MCF 10A (cell line): ENCODE measurements at regions of chr4 and their contacts with region 1.

Region 1: GRCh38 chr4:110049951-110050925 is 137.6 kb downstream of the EGF start:
- DNase-seq: peak; percentile 58
- H3K4me3 Mint-ChIP-seq: no peak overlapping the region
- H3K27ac Mint-ChIP-seq: no peak overlapping the region
- H3K4me1 Mint-ChIP-seq: peaks cover 11% of the 10 kb centered on the region
- H3K27me3 Mint-ChIP-seq: no peaks in the 10 kb centered on the region
- CTCF ChIP-seq: peak; percentile 82

Region 2: DNA sequence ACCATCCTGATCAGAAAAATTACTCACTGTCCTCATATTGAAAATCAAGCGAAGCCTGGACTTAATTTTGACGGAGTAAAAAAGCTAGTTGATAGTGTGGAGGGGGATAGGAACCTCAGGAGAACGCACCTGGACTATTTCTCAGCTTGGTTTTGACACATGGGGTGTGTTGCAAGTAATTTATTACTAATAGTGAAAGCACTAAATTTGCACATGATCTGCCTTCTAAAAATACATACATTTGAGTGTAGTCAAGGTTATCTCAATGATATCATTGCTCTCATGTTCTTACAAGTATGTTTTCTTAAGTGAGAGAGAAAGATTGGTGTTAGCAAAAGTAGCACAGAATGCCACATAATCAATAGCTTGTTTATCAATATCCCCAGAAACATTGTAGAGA is 172.8 kb before region 1 on chr4:
- CTCF ChIA-PET with region 1: no interaction called
- POLR2A ChIA-PET with region 1: no interaction called
- intact Hi-C with region 1: no loop called
- DNase-seq: no peak
- H3K4me3 Mint-ChIP-seq: no peak overlapping the region
- H3K27ac Mint-ChIP-seq: no peak overlapping the region
- H3K4me1 Mint-ChIP-seq: no peaks in the 10 kb centered on the region
- H3K27me3 Mint-ChIP-seq: no peaks in the 10 kb centered on the region
- CTCF ChIP-seq: no peak

Region 3: GRCh38 chr4:110020139-110020538 is 30.1 kb before region 1 on chr4:
- CTCF ChIA-PET with region 1: interaction called, 15 read pairs
- POLR2A ChIA-PET with region 1: interaction called, 4 read pairs
- intact Hi-C with region 1: no loop called
- DNase-seq: no peak
- H3K4me3 Mint-ChIP-seq: no peak overlapping the region
- H3K27ac Mint-ChIP-seq: no peak overlapping the region
- H3K4me1 Mint-ChIP-seq: peaks cover 7% of the 10 kb centered on the region
- H3K27me3 Mint-ChIP-seq: no peaks in the 10 kb centered on the region
- CTCF ChIP-seq: no peak

Region 4: DNA sequence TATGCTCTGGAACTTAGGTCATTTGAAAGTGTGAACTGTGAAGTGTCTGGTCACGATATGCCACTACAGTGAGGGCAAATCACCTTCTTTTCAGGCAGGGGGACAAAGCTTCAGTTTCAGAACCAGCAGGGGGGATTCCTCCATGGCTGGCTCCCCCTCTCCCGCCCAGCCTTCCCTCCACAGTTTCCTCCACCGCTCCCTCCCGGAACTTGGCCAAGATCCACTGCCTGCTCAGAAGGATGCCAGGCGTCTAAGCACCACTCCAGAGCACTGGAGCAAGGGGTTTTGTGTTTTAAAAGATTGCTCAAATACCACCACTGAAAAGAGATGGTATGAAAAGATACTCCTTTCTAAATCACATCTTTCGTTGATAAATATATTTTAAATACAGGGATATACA is 21.2 kb after region 1 on chr4:
- CTCF ChIA-PET with region 1: interaction called, 11 read pairs
- POLR2A ChIA-PET with region 1: interaction called, 3 read pairs
- intact Hi-C with region 1: no loop called
- DNase-seq: no peak
- H3K4me3 Mint-ChIP-seq: no peak overlapping the region
- H3K27ac Mint-ChIP-seq: no peak overlapping the region
- H3K4me1 Mint-ChIP-seq: no peaks in the 10 kb centered on the region
- H3K27me3 Mint-ChIP-seq: no peaks in the 10 kb centered on the region
- CTCF ChIP-seq: no peak

Region 5: GRCh38 chr4:110165382-110166285 is 115.4 kb after region 1 on chr4:
- CTCF ChIA-PET with region 1: interaction called, 21 read pairs
- POLR2A ChIA-PET with region 1: interaction called, 3 read pairs
- intact Hi-C with region 1: no loop called
- DNase-seq: peak; percentile 72
- H3K4me3 Mint-ChIP-seq: no peak overlapping the region
- H3K27ac Mint-ChIP-seq: peak overlapping the region; percentile 86
- H3K4me1 Mint-ChIP-seq: peaks cover 25% of the 10 kb centered on the region
- H3K27me3 Mint-ChIP-seq: no peaks in the 10 kb centered on the region
- CTCF ChIP-seq: no peak

Region 6: GRCh38 chr4:110193822-110194761 is 143.9 kb after region 1 on chr4:
- CTCF ChIA-PET with region 1: interaction called, 28 read pairs
- POLR2A ChIA-PET with region 1: interaction called, 6 read pairs
- intact Hi-C with region 1: loop called (anchors 1 kb)
- DNase-seq: peak; percentile 96
- H3K4me3 Mint-ChIP-seq: peak overlapping the region; percentile 31
- H3K27ac Mint-ChIP-seq: peak overlapping the region; percentile 78
- H3K4me1 Mint-ChIP-seq: peaks cover 16% of the 10 kb centered on the region
- H3K27me3 Mint-ChIP-seq: no peaks in the 10 kb centered on the region
- CTCF ChIP-seq: no peak

Region 7: DNA sequence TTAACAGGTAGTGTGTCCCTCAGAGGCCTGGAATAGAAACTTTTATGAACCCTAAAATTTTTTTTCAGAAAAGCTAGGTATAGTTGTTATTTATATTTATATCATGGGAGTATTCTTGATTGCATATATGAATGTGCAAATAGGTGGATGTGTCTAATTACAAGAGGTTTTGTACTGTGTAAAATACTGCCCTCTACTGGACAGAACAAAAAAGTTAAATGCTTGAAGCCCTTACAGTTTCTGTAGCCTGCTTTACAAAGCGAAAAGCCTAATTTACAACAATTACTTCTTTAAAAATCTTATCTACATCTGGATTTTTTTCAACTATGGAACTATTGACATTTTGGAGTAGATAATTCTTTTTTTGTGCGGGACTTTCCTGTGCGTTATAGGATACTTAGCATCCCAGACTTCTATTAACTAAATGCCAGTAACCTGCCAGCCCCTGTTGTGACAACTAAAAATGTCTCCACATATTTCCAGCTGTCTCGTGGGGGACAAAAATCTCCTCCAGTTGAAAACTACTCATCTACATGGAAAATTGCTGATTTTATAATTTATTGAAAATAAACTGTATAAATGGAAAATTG is 460.8 kb after region 1 on chr4:
- CTCF ChIA-PET with region 1: interaction called, 178 read pairs
- POLR2A ChIA-PET with region 1: interaction called, 3 read pairs
- intact Hi-C with region 1: loop called (anchors 1 kb)
- DNase-seq: peak; percentile 68
- H3K4me3 Mint-ChIP-seq: no peak overlapping the region
- H3K27ac Mint-ChIP-seq: no peak overlapping the region
- H3K4me1 Mint-ChIP-seq: no peaks in the 10 kb centered on the region
- H3K27me3 Mint-ChIP-seq: no peaks in the 10 kb centered on the region
- CTCF ChIP-seq: peak; percentile 84